Natural killer cell (primary cell): ENCODE measurements at regions of chr16 and their contacts with region 1.

Region 1: GRCh38 chr16:88505405-88506082 is 52.5 kb downstream of the ZFPM1 start:
- DNase-seq: peak; percentile 56 to 81
- ATAC-seq: peak; percentile 41 to 66 (median 62)
- H3K4me3 ChIP-seq: no peak overlapping the region
- H3K4me3 Mint-ChIP-seq: peak overlapping the region; percentile 9
- H3K27ac ChIP-seq: peak overlapping the region; percentile 20
- H3K27ac Mint-ChIP-seq: peak overlapping the region; percentile 81 to 88
- H3K4me1 ChIP-seq: peaks cover 36% of the 10 kb centered on the region
- H3K4me1 Mint-ChIP-seq: peaks cover 22 to 56% of the 10 kb centered on the region in 2 donors
- H3K27me3 ChIP-seq: no peaks in the 10 kb centered on the region
- H3K27me3 Mint-ChIP-seq: no peaks in the 10 kb centered on the region
- CTCF ChIP-seq: peak; percentile 13

Region 2: DNA sequence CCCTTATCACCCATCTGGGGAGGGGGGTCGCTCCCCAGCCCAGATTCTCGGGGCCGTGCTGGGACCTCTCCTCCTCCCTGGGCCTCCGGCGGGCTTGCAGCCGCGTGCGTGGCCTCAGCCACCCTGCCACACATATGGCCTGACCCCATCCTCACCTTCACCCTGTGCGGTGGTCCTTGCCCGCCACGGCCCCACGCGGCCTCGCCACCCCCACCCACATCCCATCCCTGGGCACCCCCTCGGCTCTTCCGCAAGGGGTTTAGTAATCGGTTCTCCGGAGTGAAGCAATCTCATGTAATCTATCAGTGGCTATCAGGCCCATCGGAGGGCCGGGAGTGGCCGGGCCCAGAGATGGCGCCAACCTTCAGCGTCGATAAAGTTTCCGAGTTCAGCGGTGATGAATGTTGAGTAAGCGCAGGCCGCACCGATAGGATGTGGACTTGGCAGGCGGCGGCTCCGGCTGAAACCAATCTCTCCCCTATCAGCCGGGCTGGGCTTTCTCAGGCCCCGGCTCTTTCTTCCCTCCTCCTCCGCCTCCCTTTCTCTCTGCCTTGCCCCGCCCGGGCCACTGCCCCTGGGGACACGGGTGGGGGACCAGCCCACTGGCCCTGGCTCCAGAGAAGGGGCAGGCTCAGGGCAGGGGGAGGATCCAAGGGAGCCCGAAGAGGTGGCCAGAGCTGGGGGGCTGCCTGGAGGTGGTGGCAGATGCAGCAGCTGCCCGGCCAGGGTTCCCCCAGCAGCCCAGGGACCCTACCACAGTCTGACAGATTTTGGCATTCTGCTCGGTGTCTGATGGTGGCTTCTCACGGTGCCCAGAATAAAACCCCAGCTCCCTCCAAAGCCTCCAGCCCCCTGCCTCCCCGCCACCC is 31.6 kb before region 1 on chr16:
- intact Hi-C with region 1: loop called (anchors 5 kb)
- DNase-seq: no peak
- ATAC-seq: no peak
- H3K4me3 ChIP-seq: no peak overlapping the region
- H3K4me3 Mint-ChIP-seq: no peak overlapping the region
- H3K27ac ChIP-seq: no peak overlapping the region
- H3K27ac Mint-ChIP-seq: peak overlapping the region in 1 of 2 donors; percentile 94
- H3K4me1 ChIP-seq: peaks cover 98% of the 10 kb centered on the region
- H3K4me1 Mint-ChIP-seq: peaks cover 54 to 75% of the 10 kb centered on the region in 2 donors
- H3K27me3 ChIP-seq: no peaks in the 10 kb centered on the region
- H3K27me3 Mint-ChIP-seq: no peaks in the 10 kb centered on the region
- CTCF ChIP-seq: no peak

Region 3: DNA sequence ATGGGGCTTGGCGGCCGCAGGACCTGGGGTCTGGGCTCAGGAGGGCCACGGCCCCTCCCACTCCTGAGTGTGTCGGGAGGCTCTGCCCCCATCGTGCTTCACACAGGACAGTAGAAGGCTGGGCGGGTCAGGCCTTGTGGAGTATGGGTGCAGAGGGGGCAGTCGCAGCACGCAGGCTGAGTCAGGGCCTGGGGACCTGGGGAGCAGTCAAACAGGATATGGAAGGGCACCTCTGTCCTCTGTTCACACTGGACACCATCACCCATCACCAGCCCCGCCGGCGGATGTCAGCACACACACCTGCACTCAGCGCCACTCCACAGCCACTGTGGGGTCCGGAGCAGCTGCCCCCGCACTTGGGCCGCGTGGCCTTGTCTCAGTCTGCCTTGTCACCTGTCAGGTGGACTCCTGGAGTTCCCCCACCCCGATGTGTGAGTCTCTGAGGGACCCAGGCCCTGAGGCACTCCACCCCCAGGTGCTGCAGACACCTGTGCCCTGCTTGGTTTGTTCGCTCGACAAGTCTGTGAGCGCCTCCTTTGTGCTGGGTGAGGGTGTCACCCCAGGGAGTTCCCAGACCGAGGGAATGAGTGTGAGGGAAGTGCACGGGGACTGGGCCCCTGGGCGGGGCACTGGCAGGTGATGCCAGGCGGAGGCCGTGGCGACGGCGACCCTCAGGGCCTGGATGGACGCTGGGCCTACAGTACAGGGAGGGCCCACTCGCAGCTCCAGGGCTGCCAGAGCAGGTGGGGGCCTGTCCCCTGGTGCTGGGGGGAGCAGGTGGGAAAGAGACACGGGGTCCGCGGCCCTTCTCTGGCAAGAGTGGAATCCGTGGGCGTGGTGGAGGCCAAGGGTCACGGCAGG is 20.8 kb before region 1 on chr16:
- intact Hi-C with region 1: no loop called
- DNase-seq: no peak
- ATAC-seq: no peak
- H3K4me3 ChIP-seq: no peak overlapping the region
- H3K4me3 Mint-ChIP-seq: no peak overlapping the region
- H3K27ac ChIP-seq: no peak overlapping the region
- H3K27ac Mint-ChIP-seq: peak overlapping the region; percentile 42 to 43
- H3K4me1 ChIP-seq: peaks cover 53% of the 10 kb centered on the region
- H3K4me1 Mint-ChIP-seq: peaks cover 27 to 52% of the 10 kb centered on the region in 2 donors
- H3K27me3 ChIP-seq: no peaks in the 10 kb centered on the region
- H3K27me3 Mint-ChIP-seq: no peaks in the 10 kb centered on the region
- CTCF ChIP-seq: no peak